CD8-positive, alpha-beta T cell (primary cell): ENCODE measurements at regions of chr18 and their contacts with region 1.

Region 1: DNA sequence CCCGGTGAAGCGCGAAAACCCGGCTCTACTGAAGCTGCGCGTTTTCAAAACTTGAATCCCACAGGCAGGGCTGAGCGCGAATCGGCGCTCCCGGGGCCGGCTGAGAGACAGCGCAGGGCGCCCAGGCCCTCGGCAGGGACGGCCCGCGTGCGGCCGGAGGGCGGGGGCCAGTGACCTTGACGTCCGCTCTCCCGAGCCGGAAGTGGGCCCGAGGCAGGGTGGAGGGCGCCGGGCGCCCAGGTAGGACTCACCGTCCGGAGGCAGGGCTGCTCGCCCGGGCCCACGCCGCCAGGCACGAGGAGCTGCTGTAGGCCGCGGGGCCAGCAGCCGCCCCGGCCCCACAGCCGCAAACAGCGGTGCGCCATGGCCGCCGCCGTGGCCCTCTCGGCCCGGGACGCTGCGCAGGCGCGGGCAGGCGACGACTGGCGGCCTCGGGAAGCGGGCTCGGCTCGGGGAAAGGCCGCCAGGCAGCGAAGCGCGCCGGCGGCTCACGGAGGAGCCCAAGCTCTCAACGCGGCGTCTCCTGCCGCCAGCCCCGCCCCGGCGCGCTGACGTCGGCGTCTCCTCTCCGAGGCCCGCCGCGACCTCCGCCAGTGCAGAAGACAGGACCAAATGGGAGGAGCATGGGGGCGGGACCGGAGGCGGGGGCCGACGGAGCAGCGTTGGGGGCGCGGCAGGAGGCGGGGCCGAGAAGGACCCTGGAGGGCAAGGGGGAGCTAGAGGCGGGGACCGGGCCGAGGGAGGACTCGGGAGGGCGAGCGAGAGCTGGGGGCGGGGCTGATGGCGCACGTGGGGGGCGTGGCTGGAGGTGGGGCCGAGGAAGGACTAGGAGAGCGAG is at the start of gene AFG3L2:
- DNase-seq: peak; percentile 100
- ATAC-seq: peak; percentile 88
- H3K4me3 ChIP-seq: peak within 1 kb of the TSS; percentile 81 to 92
- H3K4me3 Mint-ChIP-seq: peak within 1 kb of the TSS; percentile 88
- H3K27ac ChIP-seq: peak within 1 kb of the TSS; percentile 87 to 92
- H3K27ac Mint-ChIP-seq: peak within 1 kb of the TSS; percentile 93
- H3K4me1 ChIP-seq: peaks cover 40% of the 10 kb centered on the region
- H3K4me1 Mint-ChIP-seq: peaks cover 48% of the 10 kb centered on the region
- H3K27me3 ChIP-seq: no peaks in the 10 kb centered on the region
- H3K27me3 Mint-ChIP-seq: no peaks in the 10 kb centered on the region
- CTCF ChIP-seq: no peak
- total RNA-seq, gene AFG3L2: 58.4 to 59.0 TPM

Region 2: GRCh38 chr18:11851146-11851805 is 525.7 kb before region 1 on chr18 and contains the start of gene CHMP1B:
- CTCF ChIA-PET with region 1: no interaction called
- POLR2A ChIA-PET with region 1: no interaction called
- intact Hi-C with region 1: loop called (anchors 1 to 5 kb)
- DNase-seq: peak; percentile 93 to 99 (median 98)
- ATAC-seq: peak; percentile 83
- H3K4me3 ChIP-seq: peak within 1 kb of the TSS; percentile 94 to 99
- H3K4me3 Mint-ChIP-seq: peak within 1 kb of the TSS; percentile 100
- H3K27ac ChIP-seq: peak within 1 kb of the TSS; percentile 96 to 99
- H3K27ac Mint-ChIP-seq: peak within 1 kb of the TSS; percentile 100
- H3K4me1 ChIP-seq: peaks cover 25% of the 10 kb centered on the region
- H3K4me1 Mint-ChIP-seq: peaks cover 50% of the 10 kb centered on the region
- H3K27me3 ChIP-seq: no peaks in the 10 kb centered on the region
- H3K27me3 Mint-ChIP-seq: no peaks in the 10 kb centered on the region
- CTCF ChIP-seq: no peak
- total RNA-seq, gene CHMP1B: 71.2 to 74.2 TPM

Region 3: DNA sequence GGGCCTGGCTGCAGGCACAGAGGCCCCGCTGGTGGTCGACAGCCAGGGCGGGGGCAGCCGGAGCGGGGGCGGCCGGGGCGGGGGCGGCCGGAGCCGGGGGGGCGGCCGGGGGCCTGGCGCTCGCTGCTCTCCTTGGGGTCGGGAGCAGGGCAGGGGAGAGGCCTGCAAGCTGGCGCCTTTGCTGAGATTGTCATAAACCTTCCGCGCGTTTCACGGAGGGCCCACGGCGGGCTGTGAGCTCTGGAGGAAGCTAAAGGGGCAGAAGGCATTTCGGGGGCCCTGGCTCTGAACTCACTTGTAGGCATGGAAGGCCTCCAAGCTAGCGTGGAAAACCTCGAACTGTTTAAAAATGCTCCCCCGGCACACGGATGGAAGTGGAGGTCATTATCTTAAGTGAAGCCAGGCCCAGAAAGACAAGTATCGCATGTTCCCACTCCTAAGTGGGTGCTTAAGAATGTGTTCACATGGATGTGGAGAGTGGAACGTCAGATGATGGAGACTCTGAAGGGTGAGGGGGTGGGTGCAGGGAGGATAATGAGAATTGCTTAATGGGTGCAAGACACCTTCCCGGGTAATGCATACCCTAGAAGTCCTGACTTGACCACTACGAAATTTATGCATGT is 31.4 kb after region 1 on chr18:
- CTCF ChIA-PET with region 1: no interaction called
- POLR2A ChIA-PET with region 1: interaction called, 18 read pairs
- intact Hi-C with region 1: loop called (anchors 1 kb)
- DNase-seq: peak in 3 of 9 experiments; percentile 31 to 52 (median 42)
- ATAC-seq: peak; percentile 9
- H3K4me3 ChIP-seq: peak overlapping the region in 1 of 2 experiments; percentile 71
- H3K4me3 Mint-ChIP-seq: peak overlapping the region; percentile 72
- H3K27ac ChIP-seq: no peak overlapping the region
- H3K27ac Mint-ChIP-seq: peak overlapping the region; percentile 30
- H3K4me1 ChIP-seq: peaks cover 18% of the 10 kb centered on the region
- H3K4me1 Mint-ChIP-seq: peaks cover 21% of the 10 kb centered on the region
- H3K27me3 ChIP-seq: no peaks in the 10 kb centered on the region
- H3K27me3 Mint-ChIP-seq: peaks cover 10% of the 10 kb centered on the region
- CTCF ChIP-seq: no peak

Region 4: GRCh38 chr18:12702221-12703095 is 325.5 kb after region 1 on chr18 and contains the starts of genes CEP76 and PSMG2:
- CTCF ChIA-PET with region 1: no interaction called
- POLR2A ChIA-PET with region 1: interaction called, 8 read pairs
- intact Hi-C with region 1: loop called (anchors 1 kb)
- DNase-seq: peak; percentile 68 to 91 (median 83)
- ATAC-seq: peak; percentile 78
- H3K4me3 ChIP-seq: peak within 1 kb of the TSS; percentile 70 to 96
- H3K4me3 Mint-ChIP-seq: peak within 1 kb of the TSS; percentile 96
- H3K27ac ChIP-seq: peak within 1 kb of the TSS; percentile 95 to 98
- H3K27ac Mint-ChIP-seq: peak within 1 kb of the TSS; percentile 100
- H3K4me1 ChIP-seq: peaks cover 30% of the 10 kb centered on the region
- H3K4me1 Mint-ChIP-seq: peaks cover 52% of the 10 kb centered on the region
- H3K27me3 ChIP-seq: no peaks in the 10 kb centered on the region
- H3K27me3 Mint-ChIP-seq: no peaks in the 10 kb centered on the region
- CTCF ChIP-seq: no peak
- total RNA-seq, gene CEP76: 10.9 to 11.0 TPM
- total RNA-seq, gene PSMG2: 80.3 to 81.7 TPM

Region 5: GRCh38 chr18:12990967-12991838 is 614.3 kb after region 1 on chr18 and contains the start of gene CEP192:
- CTCF ChIA-PET with region 1: no interaction called
- POLR2A ChIA-PET with region 1: interaction called, 5 read pairs
- intact Hi-C with region 1: loop called in 1 of 2 experiments (anchors 5 kb)
- DNase-seq: peak; percentile 94 to 99 (median 97)
- ATAC-seq: peak; percentile 96
- H3K4me3 ChIP-seq: peak within 1 kb of the TSS; percentile 79 to 90
- H3K4me3 Mint-ChIP-seq: peak within 1 kb of the TSS; percentile 98
- H3K27ac ChIP-seq: peak within 1 kb of the TSS; percentile 57 to 75
- H3K27ac Mint-ChIP-seq: peak within 1 kb of the TSS; percentile 97
- H3K4me1 ChIP-seq: peaks cover 27% of the 10 kb centered on the region
- H3K4me1 Mint-ChIP-seq: peaks cover 17% of the 10 kb centered on the region
- H3K27me3 ChIP-seq: no peaks in the 10 kb centered on the region
- H3K27me3 Mint-ChIP-seq: no peaks in the 10 kb centered on the region
- CTCF ChIP-seq: no peak
- total RNA-seq, gene CEP192: 22.8 to 24.3 TPM